ENCODE measurements at regions of chr1 and their contacts with region 1.

Region 1: GRCh38 chr1:228664399-228664914 is 70.8 kb upstream of the RHOU start:
- DNase-seq: peak; percentile 87
- ATAC-seq: peak; percentile 53
- H3K4me3 Mint-ChIP-seq: no peak overlapping the region
- H3K27ac Mint-ChIP-seq: no peak overlapping the region
- H3K4me1 Mint-ChIP-seq: no peaks in the 10 kb centered on the region
- H3K27me3 Mint-ChIP-seq: peaks cover 2% of the 10 kb centered on the region

Region 2: DNA sequence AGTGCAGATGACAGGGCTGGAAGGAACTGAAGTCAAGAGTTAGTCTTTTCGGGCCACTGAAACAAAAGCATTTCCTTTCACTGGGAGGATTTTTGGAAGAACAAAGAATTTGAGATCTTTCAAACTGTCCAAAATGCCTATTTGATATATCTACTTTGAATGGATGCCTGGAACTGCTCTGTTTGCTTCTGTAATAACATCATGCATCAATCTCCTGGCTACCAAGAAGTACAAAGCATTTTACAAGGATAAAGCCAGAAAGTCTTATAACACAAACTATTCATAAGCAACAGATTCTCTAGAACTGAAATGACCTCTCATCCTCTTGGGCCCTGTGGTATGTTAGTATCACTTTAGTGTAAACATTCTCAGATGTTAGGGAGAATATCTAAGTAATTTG is 52.6 kb after region 1 on chr1:
- CTCF ChIA-PET with region 1: no interaction called
- POLR2A ChIA-PET with region 1: no interaction called
- intact Hi-C with region 1: no loop called
- DNase-seq: no peak
- ATAC-seq: no peak
- H3K4me3 Mint-ChIP-seq: no peak overlapping the region
- H3K27ac Mint-ChIP-seq: no peak overlapping the region
- H3K4me1 Mint-ChIP-seq: no peaks in the 10 kb centered on the region
- H3K27me3 Mint-ChIP-seq: no peaks in the 10 kb centered on the region

Region 3: GRCh38 chr1:229479660-229480399 is 815.4 kb after region 1 on chr1:
- CTCF ChIA-PET with region 1: interaction called, 3 read pairs
- POLR2A ChIA-PET with region 1: no interaction called
- intact Hi-C with region 1: loop called in 1 of 2 experiments (anchors 2 kb)
- DNase-seq: no peak
- ATAC-seq: no peak
- H3K4me3 Mint-ChIP-seq: no peak overlapping the region
- H3K27ac Mint-ChIP-seq: no peak overlapping the region
- H3K4me1 Mint-ChIP-seq: peaks cover 3% of the 10 kb centered on the region
- H3K27me3 Mint-ChIP-seq: no peaks in the 10 kb centered on the region

Region 4: DNA sequence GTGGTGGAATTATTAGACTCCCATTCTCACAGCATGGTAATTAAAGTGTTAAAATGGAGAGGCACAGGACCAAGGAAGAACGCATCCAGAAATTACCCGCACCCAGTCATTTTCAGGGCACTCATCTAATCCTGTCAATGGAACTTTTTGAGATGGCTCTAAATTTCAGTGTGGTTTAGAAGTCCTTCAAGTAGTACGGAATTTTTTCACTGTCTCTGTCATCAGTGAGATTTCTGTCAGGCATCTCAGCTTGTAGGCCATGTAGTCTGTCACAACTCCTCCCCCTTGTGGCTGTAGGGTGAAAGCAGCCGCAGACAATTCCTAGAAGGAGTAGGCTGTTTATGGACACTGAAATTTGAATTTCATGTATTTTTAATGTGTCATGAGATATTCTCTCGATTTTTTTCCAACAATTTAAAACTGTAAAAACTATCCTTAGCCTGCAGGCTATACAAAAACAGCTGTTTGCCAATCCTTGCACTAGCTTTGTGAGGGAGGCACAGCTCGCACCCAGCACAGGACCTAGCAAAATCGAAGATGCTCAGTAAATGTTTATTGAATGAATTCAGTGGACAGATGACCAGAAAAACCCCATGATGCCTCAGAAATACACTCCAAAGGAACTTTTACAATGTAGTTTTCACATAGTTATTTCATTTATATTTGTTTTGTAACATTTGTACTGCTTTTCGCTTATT is 850.3 kb after region 1 on chr1:
- CTCF ChIA-PET with region 1: no interaction called
- POLR2A ChIA-PET with region 1: no interaction called
- intact Hi-C with region 1: loop called in 1 of 2 experiments (anchors 10 kb)
- DNase-seq: peak; percentile 70
- ATAC-seq: peak; percentile 87
- H3K4me3 Mint-ChIP-seq: no peak overlapping the region
- H3K27ac Mint-ChIP-seq: no peak overlapping the region
- H3K4me1 Mint-ChIP-seq: peaks cover 6% of the 10 kb centered on the region
- H3K27me3 Mint-ChIP-seq: no peaks in the 10 kb centered on the region

Region 5: GRCh38 chr1:230310381-230311163 is 1646.1 kb after region 1 on chr1:
- CTCF ChIA-PET with region 1: no interaction called
- POLR2A ChIA-PET with region 1: no interaction called
- intact Hi-C with region 1: loop called in 1 of 2 experiments (anchors 10 kb)
- DNase-seq: peak; percentile 82
- ATAC-seq: peak; percentile 48
- H3K4me3 Mint-ChIP-seq: no peak overlapping the region
- H3K27ac Mint-ChIP-seq: no peak overlapping the region
- H3K4me1 Mint-ChIP-seq: peaks cover 15% of the 10 kb centered on the region
- H3K27me3 Mint-ChIP-seq: peaks cover 4% of the 10 kb centered on the region

Measured in activated CD4-positive, alpha-beta T cell treated with anti-CD3 and anti-CD28 coated beads for 36 hours (primary cell).